Activated T-helper 1 cell treated with anti-CD3 and anti-CD28 coated beads, Interleukin-12 subunit alpha, Interleukin-12 subunit beta, Interleukin-2, Interleukin-4 antibody, amounts not matched to agents 30 ng/mL and 10 ng/mL and 1 ng/mL, durations not matched to agents 14 hours and 24 hours and 36 hours (primary cell): ENCODE measurements at regions of chr6 and their contacts with region 1.

Region 1: GRCh38 chr6:30463651-30464618 is 25.4 kb upstream of the HLA-E start:
- DNase-seq: peak; percentile 47
- H3K4me3 Mint-ChIP-seq: no peak overlapping the region
- H3K27ac Mint-ChIP-seq: no peak overlapping the region
- H3K4me1 Mint-ChIP-seq: peaks cover 21% of the 10 kb centered on the region
- H3K27me3 Mint-ChIP-seq: peaks cover 82% of the 10 kb centered on the region

Region 2: DNA sequence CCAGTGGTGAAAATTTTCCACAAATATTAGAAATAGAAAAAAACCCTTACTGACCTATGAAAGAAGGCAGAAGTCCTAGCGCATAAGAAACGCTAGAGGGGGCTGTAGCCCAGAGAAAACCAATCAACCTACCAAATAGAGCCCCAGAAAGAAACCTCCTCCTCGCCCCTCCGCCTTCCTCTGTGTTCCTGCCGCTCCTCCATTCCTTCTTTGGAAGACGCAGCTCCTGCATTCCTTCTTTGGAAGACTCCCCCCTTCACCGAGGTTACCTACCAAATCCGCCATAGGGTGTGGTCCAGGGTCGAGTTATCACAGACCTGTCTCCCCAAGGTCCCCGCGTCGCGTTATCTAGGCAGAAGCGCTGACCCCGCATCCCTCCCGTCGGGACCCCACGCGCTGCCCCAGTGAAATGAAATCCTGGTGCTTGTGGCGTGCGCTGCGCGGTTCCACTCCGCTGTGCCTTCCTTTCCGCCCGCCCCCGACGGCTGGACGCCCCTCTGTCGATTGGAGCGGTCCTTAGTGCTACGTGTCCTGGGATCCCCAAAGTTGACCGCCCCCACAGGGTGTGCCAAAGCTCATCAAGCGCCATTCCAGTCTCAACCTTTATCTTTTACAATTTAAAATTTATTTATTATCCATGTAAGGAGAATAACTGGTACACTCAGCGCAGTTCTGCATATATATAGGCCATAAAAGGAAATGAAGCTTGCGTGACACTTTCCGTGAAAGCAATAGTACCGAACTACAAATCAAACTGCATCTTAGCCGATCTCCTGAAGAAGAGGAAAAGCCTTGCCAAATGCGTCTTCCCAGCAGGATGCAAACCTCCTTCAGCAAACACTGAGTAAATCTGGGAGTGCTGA is 106.0 kb before region 1 on chr6:
- intact Hi-C with region 1: loop called (anchors 5 kb)
- DNase-seq: peak; percentile 16
- H3K4me3 Mint-ChIP-seq: peak overlapping the region; percentile 82
- H3K27ac Mint-ChIP-seq: no peak overlapping the region
- H3K4me1 Mint-ChIP-seq: peaks cover 10% of the 10 kb centered on the region
- H3K27me3 Mint-ChIP-seq: peaks cover 73% of the 10 kb centered on the region

Region 3: GRCh38 chr6:30396833-30397479 is 67.0 kb before region 1 on chr6:
- intact Hi-C with region 1: no loop called
- DNase-seq: peak; percentile 74
- H3K4me3 Mint-ChIP-seq: no peak overlapping the region
- H3K27ac Mint-ChIP-seq: no peak overlapping the region
- H3K4me1 Mint-ChIP-seq: peaks cover 11% of the 10 kb centered on the region
- H3K27me3 Mint-ChIP-seq: peaks cover 41% of the 10 kb centered on the region